Gastrocnemius medialis (tissue), 4 donors: ENCODE measurements at regions of chr3 and their contacts with region 1.

Region 1: DNA sequence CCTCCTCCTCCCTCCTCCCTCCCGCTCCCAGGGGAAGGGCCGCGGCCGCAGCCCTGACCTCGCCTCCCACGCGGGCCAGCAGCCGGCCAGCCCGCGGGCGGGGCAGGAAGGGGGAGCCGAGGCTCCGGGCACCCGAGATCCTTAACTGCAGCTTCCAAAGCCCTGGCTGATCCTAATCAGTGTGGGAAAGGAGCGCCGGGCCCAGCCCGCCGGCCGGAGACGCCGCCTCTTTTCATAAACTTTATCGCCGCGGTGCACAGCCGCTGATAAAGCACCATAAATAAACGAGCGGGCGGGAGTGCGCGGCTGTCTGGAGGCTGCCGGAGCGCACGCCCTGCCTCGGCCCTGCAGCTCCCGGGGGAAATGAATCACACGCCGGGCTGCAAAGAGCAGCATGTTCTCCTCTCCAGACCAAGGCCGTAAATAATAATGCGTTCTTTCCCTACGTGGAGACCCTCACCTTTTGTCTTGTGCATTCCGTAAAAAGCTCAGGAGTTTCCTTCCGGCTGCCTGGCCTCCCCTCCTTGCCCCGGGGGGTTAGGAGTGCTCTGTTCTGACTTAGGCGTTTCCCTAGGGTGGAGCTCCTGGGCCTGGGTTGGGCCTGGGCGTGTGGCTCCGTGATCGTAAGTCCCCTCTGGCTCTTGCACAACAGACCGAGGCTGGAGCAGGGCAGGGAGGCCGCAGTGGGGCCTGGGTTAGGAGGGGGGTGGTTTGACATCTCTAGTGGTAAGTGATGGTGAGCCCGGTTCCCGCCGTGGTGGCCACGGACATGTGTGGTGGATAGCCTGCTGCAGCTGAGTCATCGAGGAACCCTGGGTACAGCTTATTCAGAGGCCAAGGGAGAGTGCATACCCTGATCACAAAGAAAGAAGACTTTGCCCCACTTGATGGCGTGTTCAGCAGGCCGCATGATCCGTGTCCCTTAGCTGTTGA is 132.6 kb upstream of the HES1 start:
- DNase-seq: peak; percentile 74 to 85
- ATAC-seq: peak; percentile 74 to 82
- H3K4me3 ChIP-seq: peak overlapping the region; percentile 43 to 54 (median 52)
- H3K27ac ChIP-seq: peak overlapping the region; percentile 85 to 90 (median 86)
- H3K4me1 ChIP-seq: peaks cover 32 to 41% of the 10 kb centered on the region in 2 donors
- H3K27me3 ChIP-seq: no peaks in the 10 kb centered on the region
- CTCF ChIP-seq: no peak
- POLR2A ChIP-seq: peak; percentile 13 to 27

Region 2: DNA sequence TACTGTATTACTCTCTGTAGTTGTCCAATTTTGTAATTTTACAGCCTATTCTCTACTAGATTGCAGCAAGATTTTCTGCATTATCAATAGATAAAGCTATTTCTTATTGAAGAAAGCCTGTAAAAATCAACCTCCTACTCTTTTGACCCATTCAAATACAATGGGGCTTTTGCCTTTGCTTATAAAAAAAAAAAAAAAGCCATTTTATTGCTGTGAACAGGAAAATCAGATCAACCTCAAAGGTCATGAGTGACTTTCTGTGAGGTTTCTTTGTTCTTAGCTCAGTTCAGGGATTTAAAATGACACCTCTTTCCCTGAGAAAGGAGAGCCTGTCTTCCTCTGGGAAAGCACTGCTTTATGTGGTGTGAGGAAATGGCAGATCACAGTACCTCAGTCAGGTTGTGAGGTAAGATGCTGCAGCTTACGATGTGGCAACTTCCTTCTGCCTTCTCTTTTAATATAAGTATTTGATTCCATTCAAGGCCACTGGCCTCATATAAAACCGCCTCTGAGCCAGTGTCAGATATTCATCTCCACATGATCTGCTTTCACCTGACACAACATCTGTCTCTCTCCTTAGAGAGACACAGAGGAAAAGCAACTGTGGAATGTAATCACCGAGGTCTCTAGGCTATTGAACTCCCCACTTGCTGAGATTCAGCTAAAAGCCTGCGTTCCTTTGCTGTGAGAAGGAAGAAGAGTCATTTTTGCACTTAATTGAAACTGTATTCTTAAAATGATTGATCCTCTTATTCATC is 924.2 kb before region 1 on chr3:
- in situ Hi-C with region 1: no loop called
- intact Hi-C with region 1: no loop called
- DNase-seq: no peak
- ATAC-seq: no peak
- H3K4me3 ChIP-seq: no peak overlapping the region
- H3K27ac ChIP-seq: no peak overlapping the region
- H3K4me1 ChIP-seq: no peaks in the 10 kb centered on the region
- H3K27me3 ChIP-seq: no peaks in the 10 kb centered on the region
- CTCF ChIP-seq: no peak
- POLR2A ChIP-seq: no peak

Region 3: GRCh38 chr3:193732391-193732790 is 271.0 kb before region 1 on chr3:
- in situ Hi-C with region 1: no loop called
- intact Hi-C with region 1: no loop called
- DNase-seq: no peak
- ATAC-seq: no peak
- H3K4me3 ChIP-seq: no peak overlapping the region
- H3K27ac ChIP-seq: no peak overlapping the region
- H3K4me1 ChIP-seq: no peaks in the 10 kb centered on the region
- H3K27me3 ChIP-seq: no peaks in the 10 kb centered on the region
- CTCF ChIP-seq: no peak
- POLR2A ChIP-seq: no peak

Region 4: DNA sequence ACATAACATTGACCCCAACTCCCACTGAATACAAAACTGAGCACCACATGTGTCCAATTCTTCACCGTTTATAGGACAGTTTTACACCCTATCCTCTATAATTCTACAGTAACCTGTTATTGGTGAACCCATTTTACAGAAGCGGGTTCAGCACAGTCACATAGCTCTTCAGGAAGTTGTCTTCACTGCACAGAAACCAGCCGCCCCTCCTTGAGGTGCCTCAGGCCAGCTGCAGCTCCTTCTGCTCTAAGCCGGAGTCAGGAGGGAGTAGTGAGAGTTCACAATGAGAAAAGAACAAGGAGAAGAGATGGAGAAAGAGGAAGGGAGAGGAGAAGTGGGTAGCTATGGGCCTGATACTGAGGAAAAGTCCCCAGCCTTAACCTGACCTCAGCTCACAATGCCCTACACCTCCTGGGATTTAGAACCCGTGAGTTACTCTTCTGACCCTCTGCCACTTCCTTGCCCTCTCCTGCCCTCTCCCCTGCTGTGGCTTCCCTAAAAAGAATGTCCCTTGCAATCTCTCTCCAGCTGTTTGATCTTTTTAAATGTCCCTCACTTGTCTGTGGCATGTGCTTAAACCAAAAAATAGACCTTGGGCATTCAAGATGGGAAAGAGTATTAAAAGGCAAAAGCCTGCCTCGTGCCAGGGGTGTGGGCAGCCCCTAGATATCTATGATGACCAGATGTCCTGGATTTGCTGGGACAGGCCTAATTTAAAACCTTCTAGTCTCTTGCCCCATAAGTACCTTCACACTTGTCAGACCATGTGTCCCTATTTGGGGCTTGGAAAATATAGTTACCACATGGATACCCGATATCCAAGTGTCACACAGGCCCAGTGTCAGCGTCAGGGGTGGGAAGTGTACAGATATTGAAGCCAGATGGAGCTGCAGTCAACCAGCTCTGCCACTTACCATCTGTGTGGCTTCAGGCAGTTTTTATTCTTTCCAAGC is 61.3 kb after region 1 on chr3:
- in situ Hi-C with region 1: loop called in 2 of 4 experiments (anchors 10 kb)
- intact Hi-C with region 1: loop called (anchors 2 kb)
- DNase-seq: peak; percentile 62 to 84
- ATAC-seq: peak; percentile 94 to 97
- H3K4me3 ChIP-seq: no peak overlapping the region
- H3K27ac ChIP-seq: peak overlapping the region; percentile 77 to 84 (median 79)
- H3K4me1 ChIP-seq: peaks cover 19 to 26% of the 10 kb centered on the region in 2 donors
- H3K27me3 ChIP-seq: no peaks in the 10 kb centered on the region
- CTCF ChIP-seq: peak in 3 of 5 experiments; percentile 27 to 42 (median 29)
- POLR2A ChIP-seq: no peak